ENCODE measurements at regions of chr14 and their contacts with region 1.

Region 1: GRCh38 chr14:56339855-56340701 is 221.9 kb downstream of the PELI2 start:
- DNase-seq: peak; percentile 98
- H3K4me3 ChIP-seq: 0 out of 2 replicates have a peak overlapping the region, but pooled peaks have one; percentile 34
- H3K27ac ChIP-seq: peak overlapping the region; percentile 31; the same call in 1 of the 2 replicates
- H3K4me1 ChIP-seq: peaks cover 17% of the 10 kb centered on the region
- H3K27me3 ChIP-seq: no peaks in the 10 kb centered on the region

Region 2: GRCh38 chr14:55721353-55721752 is 618.7 kb before region 1 on chr14:
- in situ Hi-C with region 1: loop called (anchors 10 kb)
- DNase-seq: peak; percentile 80
- H3K4me3 ChIP-seq: no peak overlapping the region
- H3K27ac ChIP-seq: no peak overlapping the region
- H3K4me1 ChIP-seq: peaks cover 10% of the 10 kb centered on the region
- H3K27me3 ChIP-seq: 0 out of 2 replicates have a peak, but pooled peaks cover 6% of the 10 kb centered on the region

Region 3: GRCh38 chr14:56004786-56005185 is 335.3 kb before region 1 on chr14:
- in situ Hi-C with region 1: loop called (anchors 5 kb)
- DNase-seq: peak; percentile 89
- H3K4me3 ChIP-seq: peak overlapping the region; percentile 69
- H3K27ac ChIP-seq: peak overlapping the region; percentile 97
- H3K4me1 ChIP-seq: peaks cover 28% of the 10 kb centered on the region
- H3K27me3 ChIP-seq: no peaks in the 10 kb centered on the region

Region 4: GRCh38 chr14:56159066-56159465 is 181.0 kb before region 1 on chr14:
- in situ Hi-C with region 1: no loop called
- DNase-seq: no peak
- H3K4me3 ChIP-seq: no peak overlapping the region
- H3K27ac ChIP-seq: no peak overlapping the region
- H3K4me1 ChIP-seq: peaks cover 9% of the 10 kb centered on the region
- H3K27me3 ChIP-seq: no peaks in the 10 kb centered on the region

Region 5: GRCh38 chr14:56514663-56515371 is 174.7 kb after region 1 on chr14:
- in situ Hi-C with region 1: no loop called
- DNase-seq: peak; percentile 73
- H3K4me3 ChIP-seq: no peak overlapping the region; the same call in 1 of the 2 replicates
- H3K27ac ChIP-seq: no peak overlapping the region
- H3K4me1 ChIP-seq: 0 out of 2 replicates have a peak, but pooled peaks cover 3% of the 10 kb centered on the region
- H3K27me3 ChIP-seq: no peaks in the 10 kb centered on the region; the same call in none of the 2 replicates

Measured in GM23248 (cell line).